MCF 10A (cell line): ENCODE measurements at regions of chr7 and their contacts with region 1.

Region 1: GRCh38 chr7:5657901-5658300 is 123.6 kb downstream of the RNF216 start:
- DNase-seq: peak; percentile 73
- H3K4me3 Mint-ChIP-seq: peak overlapping the region; percentile 19
- H3K27ac Mint-ChIP-seq: no peak overlapping the region
- H3K4me1 Mint-ChIP-seq: peaks cover 16% of the 10 kb centered on the region
- H3K27me3 Mint-ChIP-seq: no peaks in the 10 kb centered on the region
- CTCF ChIP-seq: no peak

Region 2: DNA sequence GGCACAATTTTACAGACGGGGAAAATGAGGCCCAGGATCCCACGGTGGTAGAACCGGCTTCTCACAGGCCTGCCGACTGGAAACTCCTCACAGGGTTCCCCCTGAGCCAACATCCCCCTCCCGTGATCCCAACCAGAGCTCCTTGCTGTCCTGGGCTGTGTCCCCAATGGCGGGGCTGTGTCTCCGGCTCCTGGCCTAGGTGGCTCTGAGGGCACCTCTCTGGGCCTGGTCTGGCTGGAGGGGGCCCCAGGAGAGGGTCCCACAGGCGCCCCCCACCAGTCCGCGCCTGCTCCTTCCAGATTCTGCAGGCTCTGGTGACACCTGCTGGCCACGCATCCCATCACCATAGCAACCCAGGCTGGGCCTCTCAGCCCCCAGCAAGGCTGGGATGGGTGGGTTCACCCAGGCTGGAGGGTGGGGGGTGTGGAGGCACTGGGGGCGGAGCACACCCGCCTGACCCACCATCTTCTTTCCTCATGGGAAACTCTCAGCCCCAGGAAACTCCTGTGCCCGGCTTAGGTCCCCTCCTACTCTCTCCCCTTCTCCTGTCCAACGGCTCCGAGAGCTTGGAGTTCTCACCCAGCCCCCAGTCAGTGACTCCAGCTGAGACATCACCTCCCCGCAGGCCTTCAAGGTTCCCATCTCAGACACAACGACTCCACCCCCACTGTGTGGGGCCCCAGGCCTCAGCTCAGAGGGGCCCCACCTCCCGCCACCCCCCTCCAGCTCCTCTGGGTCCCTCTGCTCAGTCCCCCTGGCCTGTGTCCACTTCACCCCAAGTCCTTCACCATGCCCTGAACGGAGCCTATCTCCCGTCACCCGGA is 207.1 kb before region 1 on chr7:
- CTCF ChIA-PET with region 1: no interaction called
- POLR2A ChIA-PET with region 1: no interaction called
- intact Hi-C with region 1: no loop called
- DNase-seq: peak; percentile 46
- H3K4me3 Mint-ChIP-seq: no peak overlapping the region
- H3K27ac Mint-ChIP-seq: no peak overlapping the region
- H3K4me1 Mint-ChIP-seq: peaks cover 7% of the 10 kb centered on the region
- H3K27me3 Mint-ChIP-seq: no peaks in the 10 kb centered on the region
- CTCF ChIP-seq: peak; percentile 56

Region 3: DNA sequence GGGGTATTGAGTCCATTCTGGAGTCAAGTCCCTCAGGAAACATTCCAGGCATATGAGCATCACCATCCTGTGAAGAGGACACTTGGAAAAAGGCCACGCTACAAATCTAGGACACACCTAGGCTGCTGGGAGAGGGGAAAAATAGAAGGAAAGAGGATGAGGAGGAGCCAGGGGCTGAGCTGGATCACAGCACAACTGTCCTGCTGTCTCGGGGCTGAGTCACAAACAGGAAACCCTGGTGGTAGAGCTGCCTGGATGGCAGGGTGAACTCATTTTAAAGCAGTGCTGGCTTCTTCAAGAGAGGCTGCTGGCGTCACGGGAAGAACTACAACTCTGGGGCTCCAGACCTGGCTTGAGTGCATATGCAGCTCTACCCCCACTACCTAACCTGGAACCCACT is 28.0 kb before region 1 on chr7:
- CTCF ChIA-PET with region 1: interaction called, 3 read pairs
- POLR2A ChIA-PET with region 1: interaction called, 17 read pairs
- intact Hi-C with region 1: no loop called
- DNase-seq: peak; percentile 86
- H3K4me3 Mint-ChIP-seq: no peak overlapping the region
- H3K27ac Mint-ChIP-seq: peak overlapping the region; percentile 22
- H3K4me1 Mint-ChIP-seq: peaks cover 21% of the 10 kb centered on the region
- H3K27me3 Mint-ChIP-seq: no peaks in the 10 kb centered on the region
- CTCF ChIP-seq: no peak

Region 4: DNA sequence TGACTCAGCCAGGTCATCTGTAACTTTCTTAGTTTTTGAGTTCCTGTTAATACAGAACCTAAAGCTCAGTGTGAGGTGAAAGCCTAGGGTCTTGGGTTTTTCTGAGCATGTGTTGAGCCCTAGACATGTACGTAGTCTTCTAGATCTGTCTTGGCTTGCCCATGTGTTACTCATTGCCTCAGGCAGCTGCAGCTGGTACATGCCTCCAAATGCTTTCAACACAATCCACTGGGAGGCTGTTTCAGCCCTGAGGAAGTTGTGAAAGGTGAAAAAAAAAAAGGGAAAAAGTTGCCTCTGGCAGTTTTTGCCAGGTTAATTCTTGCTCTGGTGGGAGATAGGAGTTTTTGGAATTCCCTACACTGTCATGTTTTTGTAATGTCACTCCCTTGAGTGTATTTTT is 11.0 kb before region 1 on chr7:
- CTCF ChIA-PET with region 1: interaction called, 28 read pairs
- POLR2A ChIA-PET with region 1: interaction called, 18 read pairs
- intact Hi-C with region 1: no loop called
- DNase-seq: peak; percentile 95
- H3K4me3 Mint-ChIP-seq: peak overlapping the region; percentile 8
- H3K27ac Mint-ChIP-seq: peak overlapping the region; percentile 84
- H3K4me1 Mint-ChIP-seq: peaks cover 25% of the 10 kb centered on the region
- H3K27me3 Mint-ChIP-seq: no peaks in the 10 kb centered on the region
- CTCF ChIP-seq: no peak